Dendritic cell treated with granulocyte-macrophage colony-stimulating factor and Interleukin-4, amounts not matched to agents 40 ng/mL and 50 ng/mL, for 4 days (primary cell): ENCODE measurements at regions of chr5 and their contacts with region 1.

Region 1: DNA sequence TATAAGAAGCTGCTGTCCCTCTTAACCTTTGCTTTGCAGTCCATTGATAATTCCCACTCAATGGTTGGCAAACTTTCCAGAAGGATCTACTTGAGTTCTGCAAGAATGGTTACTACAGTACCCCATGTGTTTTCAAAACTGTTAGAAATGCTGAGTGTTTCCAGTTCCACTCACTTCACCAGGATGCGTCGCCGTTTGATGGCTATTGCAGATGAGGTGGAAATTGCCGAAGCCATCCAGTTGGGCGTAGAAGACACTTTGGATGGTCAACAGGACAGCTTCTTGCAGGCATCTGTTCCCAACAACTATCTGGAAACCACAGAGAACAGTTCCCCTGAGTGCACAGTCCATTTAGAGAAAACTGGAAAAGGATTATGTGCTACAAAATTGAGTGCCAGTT is 27.8 kb upstream of the SETD9 start:
- H3K4me3 Mint-ChIP-seq: no peak overlapping the region
- H3K27ac Mint-ChIP-seq: no peak overlapping the region
- H3K4me1 Mint-ChIP-seq: peaks cover 7% of the 10 kb centered on the region
- H3K27me3 Mint-ChIP-seq: no peaks in the 10 kb centered on the region

Region 2: GRCh38 chr5:55936100-55936693 is 945.4 kb before region 1 on chr5:
- intact Hi-C with region 1: loop called (anchors 10 kb)
- H3K4me3 Mint-ChIP-seq: no peak overlapping the region
- H3K27ac Mint-ChIP-seq: no peak overlapping the region
- H3K4me1 Mint-ChIP-seq: no peaks in the 10 kb centered on the region
- H3K27me3 Mint-ChIP-seq: no peaks in the 10 kb centered on the region

Region 3: DNA sequence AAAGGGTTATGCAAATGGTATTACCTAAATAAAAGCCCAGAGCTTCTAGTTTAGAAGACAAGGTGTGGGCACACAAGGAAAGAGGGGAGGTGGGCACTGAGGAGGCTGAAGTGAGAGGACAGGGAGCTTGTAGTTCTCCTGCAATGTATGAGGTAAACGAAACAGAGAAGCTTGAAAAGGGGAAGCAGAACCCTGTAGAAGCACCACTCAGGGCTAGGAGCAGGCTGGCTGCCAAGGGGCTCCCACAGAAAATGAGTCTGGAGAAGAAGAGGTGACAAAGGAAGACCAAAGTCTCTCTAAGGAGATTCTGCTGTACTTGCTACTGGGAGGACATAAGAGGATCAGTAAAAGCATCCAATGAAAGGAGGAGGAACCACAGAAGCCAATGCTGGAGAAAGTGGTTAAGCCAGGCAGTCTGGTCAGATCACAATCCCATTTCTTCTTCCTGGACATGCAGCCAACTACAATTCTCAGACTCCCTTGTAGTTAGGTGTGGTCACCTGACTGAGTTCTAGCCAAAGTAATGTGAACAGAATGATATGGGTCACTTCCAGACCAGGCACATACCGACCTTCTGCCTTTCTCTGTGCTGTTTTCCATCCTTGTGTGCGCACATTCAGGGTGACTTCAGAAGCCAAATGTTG is 240.7 kb before region 1 on chr5:
- intact Hi-C with region 1: no loop called
- H3K4me3 Mint-ChIP-seq: no peak overlapping the region
- H3K27ac Mint-ChIP-seq: peak overlapping the region; percentile 68
- H3K4me1 Mint-ChIP-seq: peaks cover 50% of the 10 kb centered on the region
- H3K27me3 Mint-ChIP-seq: no peaks in the 10 kb centered on the region

Region 4: GRCh38 chr5:56862909-56863308 is 18.7 kb before region 1 on chr5:
- intact Hi-C with region 1: loop called (anchors 2 kb)
- H3K4me3 Mint-ChIP-seq: no peak overlapping the region
- H3K27ac Mint-ChIP-seq: no peak overlapping the region
- H3K4me1 Mint-ChIP-seq: no peaks in the 10 kb centered on the region
- H3K27me3 Mint-ChIP-seq: no peaks in the 10 kb centered on the region